Caco-2 (cell line): ENCODE measurements at regions of chr12 and their contacts with region 1.

Region 1: GRCh38 chr12:751192-751998 is 984 bp upstream of the WNK1 start:
- DNase-seq: peak; percentile 98
- H3K4me3 ChIP-seq: peak overlapping the region; percentile 42
- H3K4me3 Mint-ChIP-seq: no peak overlapping the region
- H3K27ac Mint-ChIP-seq: no peak overlapping the region
- H3K4me1 ChIP-seq: peaks cover 14% of the 10 kb centered on the region
- H3K4me1 Mint-ChIP-seq: peaks cover 20% of the 10 kb centered on the region
- H3K27me3 ChIP-seq: no peaks in the 10 kb centered on the region
- H3K27me3 Mint-ChIP-seq: no peaks in the 10 kb centered on the region
- CTCF ChIP-seq: peak; percentile 88 to 95

Region 2: DNA sequence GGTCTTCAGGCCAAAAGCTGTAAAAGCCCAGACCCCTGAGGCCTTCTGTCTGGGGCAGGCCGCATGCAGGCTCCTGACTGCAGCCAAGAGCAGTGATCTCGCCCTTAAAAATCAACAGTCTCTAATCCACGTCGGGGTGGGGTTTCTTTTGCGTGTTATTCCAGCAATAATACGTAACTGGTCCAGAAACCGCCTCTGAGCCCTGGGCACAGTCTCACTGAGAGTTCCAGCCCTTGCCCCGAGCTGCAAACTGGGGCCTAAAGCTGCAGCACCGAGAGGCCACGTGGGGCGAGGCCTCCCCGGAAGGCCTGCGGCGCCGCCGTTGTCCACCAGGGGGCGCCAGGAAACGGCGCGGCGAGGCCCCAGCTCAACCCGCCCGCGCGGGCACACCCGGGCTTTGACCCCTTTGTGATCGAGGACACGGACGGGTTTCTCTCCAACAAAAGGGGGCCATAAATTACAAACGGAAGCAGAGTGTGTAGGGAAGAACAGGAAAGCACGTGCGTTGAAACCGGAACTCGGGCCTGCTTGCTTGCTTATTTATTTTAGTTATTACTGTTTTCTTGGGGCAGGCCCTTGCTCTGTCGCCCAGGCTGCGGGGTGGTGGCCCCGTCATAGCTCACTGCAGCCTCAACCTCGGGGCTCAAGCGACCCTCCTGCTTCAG is 175.3 kb before region 1 on chr12:
- CTCF ChIA-PET with region 1: interaction called, 102 read pairs
- POLR2A ChIA-PET with region 1: interaction called, 36 read pairs
- intact Hi-C with region 1: loop called (anchors 1 kb)
- DNase-seq: peak; percentile 86 to 96
- H3K4me3 ChIP-seq: no peak overlapping the region
- H3K4me3 Mint-ChIP-seq: peak overlapping the region; percentile 55
- H3K27ac Mint-ChIP-seq: peak overlapping the region; percentile 67
- H3K4me1 ChIP-seq: peaks cover 52% of the 10 kb centered on the region
- H3K4me1 Mint-ChIP-seq: peaks cover 36% of the 10 kb centered on the region
- H3K27me3 ChIP-seq: no peaks in the 10 kb centered on the region
- H3K27me3 Mint-ChIP-seq: no peaks in the 10 kb centered on the region
- CTCF ChIP-seq: peak; percentile 96 to 100

Region 3: GRCh38 chr12:630656-631632 is 120.5 kb before region 1 on chr12:
- CTCF ChIA-PET with region 1: interaction called, 14 read pairs
- POLR2A ChIA-PET with region 1: interaction called, 21 read pairs
- intact Hi-C with region 1: loop called (anchors 1 kb)
- DNase-seq: no peak
- H3K4me3 ChIP-seq: no peak overlapping the region
- H3K4me3 Mint-ChIP-seq: peak overlapping the region; percentile 56
- H3K27ac Mint-ChIP-seq: peak overlapping the region; percentile 88
- H3K4me1 ChIP-seq: peaks cover 67% of the 10 kb centered on the region
- H3K4me1 Mint-ChIP-seq: peaks cover 57% of the 10 kb centered on the region
- H3K27me3 ChIP-seq: no peaks in the 10 kb centered on the region
- H3K27me3 Mint-ChIP-seq: no peaks in the 10 kb centered on the region
- CTCF ChIP-seq: no peak

Region 4: DNA sequence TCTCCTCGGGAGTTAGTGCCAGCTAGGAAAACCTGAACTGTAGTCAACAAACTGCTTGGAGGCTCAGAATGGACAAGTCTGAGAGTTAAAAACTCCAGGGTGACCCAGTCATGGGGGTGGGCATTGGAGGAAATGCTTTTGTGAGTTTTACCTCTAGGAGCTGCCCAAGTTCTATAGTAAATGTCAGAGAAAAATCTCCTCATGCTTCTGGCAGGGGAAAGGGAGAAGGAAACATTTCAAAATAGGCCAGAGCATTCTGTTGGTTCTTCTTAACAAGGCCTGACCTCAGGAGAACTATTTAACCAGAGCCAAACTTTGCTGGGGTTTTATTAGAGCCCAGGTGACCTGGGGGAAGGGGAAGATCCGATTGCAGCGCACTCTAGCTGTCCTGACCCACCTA is 100.4 kb before region 1 on chr12:
- CTCF ChIA-PET with region 1: interaction called, 10 read pairs
- POLR2A ChIA-PET with region 1: interaction called, 3 read pairs
- intact Hi-C with region 1: loop called (anchors 2 kb)
- DNase-seq: no peak
- H3K4me3 ChIP-seq: no peak overlapping the region
- H3K4me3 Mint-ChIP-seq: no peak overlapping the region
- H3K27ac Mint-ChIP-seq: no peak overlapping the region
- H3K4me1 ChIP-seq: peaks cover under 1% of the 10 kb centered on the region; the same call in 1 of the 2 replicates
- H3K4me1 Mint-ChIP-seq: peaks cover under 1% of the 10 kb centered on the region
- H3K27me3 ChIP-seq: no peaks in the 10 kb centered on the region
- H3K27me3 Mint-ChIP-seq: peaks cover 3% of the 10 kb centered on the region
- CTCF ChIP-seq: peak in 1 of 2 experiments; percentile 9

Region 5: GRCh38 chr12:728781-729180 is 22.6 kb before region 1 on chr12:
- CTCF ChIA-PET with region 1: no interaction called
- POLR2A ChIA-PET with region 1: no interaction called
- intact Hi-C with region 1: no loop called
- DNase-seq: no peak
- H3K4me3 ChIP-seq: no peak overlapping the region
- H3K4me3 Mint-ChIP-seq: no peak overlapping the region
- H3K27ac Mint-ChIP-seq: no peak overlapping the region
- H3K4me1 ChIP-seq: peaks cover 5% of the 10 kb centered on the region; the same call in 1 of the 2 replicates
- H3K4me1 Mint-ChIP-seq: peaks cover 7% of the 10 kb centered on the region
- H3K27me3 ChIP-seq: no peaks in the 10 kb centered on the region; the same call in 1 of the 2 replicates
- H3K27me3 Mint-ChIP-seq: no peaks in the 10 kb centered on the region
- CTCF ChIP-seq: no peak

Region 6: DNA sequence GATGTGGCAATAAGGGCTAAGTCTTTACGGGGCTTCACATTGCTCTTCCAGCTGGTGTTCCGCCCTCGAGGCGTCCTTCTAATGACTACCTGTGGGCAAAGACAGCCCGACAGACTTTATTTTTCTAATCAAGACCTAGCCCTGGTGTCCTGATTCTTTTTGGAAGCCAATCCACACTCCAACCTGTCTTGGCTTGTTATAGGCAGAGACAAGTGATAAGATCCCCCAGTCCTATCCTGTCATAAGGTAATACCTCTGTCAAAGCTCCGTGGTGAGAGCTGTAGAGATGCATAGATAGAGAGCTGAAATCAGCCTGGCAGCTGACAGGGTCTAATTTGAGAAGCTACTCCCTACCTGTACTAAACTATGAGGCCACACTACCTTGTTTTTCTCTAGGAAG is 10.5 kb before region 1 on chr12:
- CTCF ChIA-PET with region 1: interaction called, 18 read pairs
- POLR2A ChIA-PET with region 1: interaction called, 3 read pairs
- intact Hi-C with region 1: no loop called
- DNase-seq: peak in 1 of 2 experiments; percentile 20
- H3K4me3 ChIP-seq: no peak overlapping the region
- H3K4me3 Mint-ChIP-seq: no peak overlapping the region
- H3K27ac Mint-ChIP-seq: peak overlapping the region; percentile 32
- H3K4me1 ChIP-seq: peaks cover 12% of the 10 kb centered on the region
- H3K4me1 Mint-ChIP-seq: peaks cover 9% of the 10 kb centered on the region
- H3K27me3 ChIP-seq: no peaks in the 10 kb centered on the region
- H3K27me3 Mint-ChIP-seq: no peaks in the 10 kb centered on the region
- CTCF ChIP-seq: no peak

Region 7: DNA sequence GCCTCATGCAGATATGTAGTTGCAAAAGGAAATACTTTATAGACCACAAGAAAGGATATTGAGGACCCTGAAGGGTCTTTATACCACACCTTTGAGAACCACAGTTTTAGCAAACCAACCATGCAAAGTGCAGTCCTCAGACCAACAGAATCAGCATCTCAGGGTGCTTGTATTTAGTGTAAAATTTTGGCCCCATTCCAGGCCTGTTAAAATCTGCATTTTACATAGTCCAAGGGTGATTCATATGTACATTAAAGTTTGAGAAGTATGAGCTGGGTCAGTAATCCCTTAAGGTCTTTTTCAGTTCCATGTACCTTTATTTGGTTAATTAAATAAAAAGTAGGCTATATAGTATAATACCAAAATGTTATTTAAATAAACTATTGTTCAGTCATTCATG is 92.2 kb after region 1 on chr12:
- CTCF ChIA-PET with region 1: no interaction called
- POLR2A ChIA-PET with region 1: no interaction called
- intact Hi-C with region 1: no loop called
- DNase-seq: no peak
- H3K4me3 ChIP-seq: no peak overlapping the region
- H3K4me3 Mint-ChIP-seq: no peak overlapping the region
- H3K27ac Mint-ChIP-seq: no peak overlapping the region
- H3K4me1 ChIP-seq: no peaks in the 10 kb centered on the region
- H3K4me1 Mint-ChIP-seq: no peaks in the 10 kb centered on the region
- H3K27me3 ChIP-seq: no peaks in the 10 kb centered on the region
- H3K27me3 Mint-ChIP-seq: no peaks in the 10 kb centered on the region
- CTCF ChIP-seq: no peak

Region 8: GRCh38 chr12:1380171-1380974 is 629.0 kb after region 1 on chr12:
- CTCF ChIA-PET with region 1: no interaction called
- POLR2A ChIA-PET with region 1: no interaction called
- intact Hi-C with region 1: no loop called
- DNase-seq: no peak
- H3K4me3 ChIP-seq: no peak overlapping the region
- H3K4me3 Mint-ChIP-seq: no peak overlapping the region
- H3K27ac Mint-ChIP-seq: no peak overlapping the region
- H3K4me1 ChIP-seq: no peaks in the 10 kb centered on the region
- H3K4me1 Mint-ChIP-seq: no peaks in the 10 kb centered on the region
- H3K27me3 ChIP-seq: no peaks in the 10 kb centered on the region
- H3K27me3 Mint-ChIP-seq: no peaks in the 10 kb centered on the region
- CTCF ChIP-seq: no peak